Right lobe of liver (tissue), 6 donors: ENCODE measurements at regions of chr9 and their contacts with region 1.

Region 1: DNA sequence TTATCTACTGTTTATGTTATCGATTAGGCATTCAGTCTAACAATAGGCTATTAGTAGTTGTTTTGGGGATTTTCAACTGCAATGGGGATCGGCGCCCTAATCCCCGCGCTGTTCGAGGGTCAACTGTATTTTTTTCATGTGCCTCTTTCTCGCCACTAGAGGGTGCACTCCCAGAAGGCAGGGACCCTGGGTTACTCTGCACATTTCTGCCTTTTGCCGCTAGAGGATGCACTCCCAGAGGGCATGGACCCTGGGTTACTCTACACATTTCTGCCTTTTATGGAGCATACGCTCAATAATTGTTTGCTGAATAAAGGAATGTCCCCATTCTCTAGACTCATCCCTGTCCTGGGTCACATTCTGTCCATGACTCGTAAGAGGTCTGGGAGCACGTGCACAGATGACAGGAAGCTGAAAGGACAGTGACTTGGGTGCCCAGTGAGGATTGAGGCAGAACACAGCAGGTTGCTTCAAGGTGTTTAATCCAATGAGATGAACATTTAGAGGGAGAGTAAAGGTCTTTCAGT is 27.9 kb upstream of the RECK start:
- DNase-seq: peak; percentile 40 to 62 (median 60)
- ATAC-seq: peak; percentile 98 to 99 (median 98)
- H3K4me3 ChIP-seq: no peak overlapping the region
- H3K27ac ChIP-seq: no peak overlapping the region
- H3K4me1 ChIP-seq: peaks cover 0 to 3% (median 0%) of the 10 kb centered on the region in 4 donors
- H3K27me3 ChIP-seq: no peaks in the 10 kb centered on the region
- CTCF ChIP-seq: peak; percentile 98 to 100 (median 100)
- POLR2A ChIP-seq: no peak

Region 2: GRCh38 chr9:35954942-35955546 is 53.8 kb before region 1 on chr9:
- intact Hi-C with region 1: loop called in 1 of 2 experiments (anchors 10 kb)
- DNase-seq: peak in 1 of 3 donors; percentile 58
- ATAC-seq: peak; percentile 91 to 95 (median 94)
- H3K4me3 ChIP-seq: no peak overlapping the region
- H3K27ac ChIP-seq: no peak overlapping the region
- H3K4me1 ChIP-seq: no peaks in the 10 kb centered on the region
- H3K27me3 ChIP-seq: no peaks in the 10 kb centered on the region
- CTCF ChIP-seq: peak; percentile 79 to 87 (median 84)
- POLR2A ChIP-seq: no peak

Region 3: DNA sequence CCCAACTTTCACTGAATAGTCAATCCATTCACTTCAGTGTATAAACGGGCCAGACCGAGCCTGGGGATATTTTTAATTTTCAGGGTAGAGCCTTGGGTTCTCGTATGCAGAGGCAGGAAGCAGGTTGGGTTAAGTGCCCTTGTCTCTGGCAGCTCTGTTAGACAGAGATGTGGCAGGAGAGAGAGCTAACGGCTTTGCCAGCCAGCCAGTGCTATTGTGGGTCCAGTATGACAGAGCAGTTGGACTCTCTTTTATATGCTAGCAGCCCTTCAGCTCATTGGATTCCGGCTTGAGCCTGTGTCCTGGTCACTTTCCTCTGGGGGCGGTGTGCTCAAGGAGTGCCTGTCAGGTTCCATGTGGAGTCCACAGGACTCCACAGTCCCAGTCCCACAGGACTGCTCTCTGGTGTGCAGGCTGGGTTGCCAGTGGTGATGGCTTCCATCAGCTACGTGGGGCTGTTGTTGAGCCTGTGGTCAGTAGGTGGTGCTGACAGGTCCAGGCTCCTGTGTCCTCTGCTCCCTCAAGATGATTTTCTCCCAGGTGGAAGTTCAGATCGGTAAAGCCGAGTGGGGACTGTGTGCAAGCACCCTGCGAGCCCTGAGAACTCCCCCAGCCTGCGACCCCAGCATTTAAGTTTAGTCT is 196.2 kb after region 1 on chr9:
- intact Hi-C with region 1: no loop called
- DNase-seq: peak in 2 of 3 donors; percentile 31 to 47
- ATAC-seq: peak; percentile 77 to 88 (median 82)
- H3K4me3 ChIP-seq: no peak overlapping the region
- H3K27ac ChIP-seq: no peak overlapping the region
- H3K4me1 ChIP-seq: peaks cover 0 to 14% (median 7%) of the 10 kb centered on the region in 4 donors
- H3K27me3 ChIP-seq: no peaks in the 10 kb centered on the region
- CTCF ChIP-seq: peak in 3 of 4 donors; percentile 23 to 43 (median 36)
- POLR2A ChIP-seq: no peak